CD8-positive, alpha-beta T cell (primary cell): ENCODE measurements at regions of chr3 and their contacts with region 1.

Region 1: GRCh38 chr3:71710906-71711494 is 14.2 kb downstream of the EIF4E3 start:
- DNase-seq: peak in 2 of 9 experiments; percentile 59 to 69
- ATAC-seq: peak; percentile 73
- H3K4me3 ChIP-seq: no peak overlapping the region
- H3K4me3 Mint-ChIP-seq: no peak overlapping the region
- H3K27ac ChIP-seq: no peak overlapping the region
- H3K27ac Mint-ChIP-seq: peak overlapping the region; percentile 7
- H3K4me1 ChIP-seq: peaks cover 23% of the 10 kb centered on the region
- H3K4me1 Mint-ChIP-seq: peaks cover 72% of the 10 kb centered on the region
- H3K27me3 ChIP-seq: no peaks in the 10 kb centered on the region
- H3K27me3 Mint-ChIP-seq: no peaks in the 10 kb centered on the region
- CTCF ChIP-seq: peak; percentile 87

Region 2: GRCh38 chr3:71753630-71754483 is 42.9 kb after region 1 on chr3 and contains the start of gene GPR27:
- CTCF ChIA-PET with region 1: interaction called, 6 read pairs
- POLR2A ChIA-PET with region 1: no interaction called
- intact Hi-C with region 1: loop called in 1 of 2 experiments (anchors 5 kb)
- DNase-seq: peak in 2 of 9 experiments; percentile 33 to 40
- ATAC-seq: peak; percentile 51
- H3K4me3 ChIP-seq: peak within 1 kb of the TSS in 1 of 2 experiments; percentile 33
- H3K4me3 Mint-ChIP-seq: peak within 1 kb of the TSS; percentile 78
- H3K27ac ChIP-seq: no peak within 1 kb of the TSS
- H3K27ac Mint-ChIP-seq: no peak within 1 kb of the TSS
- H3K4me1 ChIP-seq: peaks cover 5% of the 10 kb centered on the region
- H3K4me1 Mint-ChIP-seq: peaks cover 10% of the 10 kb centered on the region
- H3K27me3 ChIP-seq: peaks cover 3 to 15% of the 10 kb centered on the region in 2 experiments
- H3K27me3 Mint-ChIP-seq: peaks cover 31% of the 10 kb centered on the region
- CTCF ChIP-seq: no peak
- total RNA-seq, gene GPR27: 0.28 to 0.30 TPM

Region 3: GRCh38 chr3:71859123-71859519 is 148.1 kb after region 1 on chr3:
- CTCF ChIA-PET with region 1: interaction called, 36 read pairs
- POLR2A ChIA-PET with region 1: no interaction called
- intact Hi-C with region 1: loop called (anchors 1 kb)
- DNase-seq: peak in 2 of 9 experiments; percentile 65 to 75
- ATAC-seq: peak; percentile 75
- H3K4me3 ChIP-seq: no peak overlapping the region
- H3K4me3 Mint-ChIP-seq: no peak overlapping the region
- H3K27ac ChIP-seq: no peak overlapping the region
- H3K27ac Mint-ChIP-seq: no peak overlapping the region
- H3K4me1 ChIP-seq: no peaks in the 10 kb centered on the region
- H3K4me1 Mint-ChIP-seq: peaks cover 5% of the 10 kb centered on the region
- H3K27me3 ChIP-seq: peaks cover 0 to 4% of the 10 kb centered on the region in 2 experiments
- H3K27me3 Mint-ChIP-seq: peaks cover 24% of the 10 kb centered on the region
- CTCF ChIP-seq: peak; percentile 47

Region 4: DNA sequence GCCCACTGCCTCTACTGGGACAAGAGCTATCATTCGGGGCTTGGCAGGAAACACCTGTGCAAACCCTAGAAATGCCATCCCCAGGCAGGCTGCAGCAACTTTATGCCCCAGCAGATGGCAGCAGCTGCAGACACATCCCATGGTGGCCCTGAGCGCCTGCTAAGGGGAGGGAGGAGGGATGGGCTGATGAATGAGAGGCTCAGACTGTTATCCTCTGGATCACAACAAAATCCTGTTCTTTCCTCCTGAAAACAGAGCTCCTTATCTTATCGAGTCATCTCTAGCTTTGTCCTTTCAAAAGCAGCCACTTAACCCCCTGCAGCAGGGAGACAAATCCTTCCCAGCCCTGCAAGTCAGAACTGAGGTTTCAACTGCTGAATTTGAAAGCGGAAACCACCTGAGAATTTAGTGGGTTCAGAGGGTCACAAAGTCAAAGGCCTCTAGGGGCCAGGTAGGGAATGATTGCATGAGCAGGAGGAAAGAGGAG is 164.5 kb after region 1 on chr3:
- CTCF ChIA-PET with region 1: interaction called, 19 read pairs
- POLR2A ChIA-PET with region 1: no interaction called
- intact Hi-C with region 1: loop called (anchors 1 to 5 kb)
- DNase-seq: peak; percentile 60 to 84 (median 71)
- ATAC-seq: peak; percentile 99
- H3K4me3 ChIP-seq: no peak overlapping the region
- H3K4me3 Mint-ChIP-seq: no peak overlapping the region
- H3K27ac ChIP-seq: no peak overlapping the region
- H3K27ac Mint-ChIP-seq: no peak overlapping the region
- H3K4me1 ChIP-seq: no peaks in the 10 kb centered on the region
- H3K4me1 Mint-ChIP-seq: peaks cover 12% of the 10 kb centered on the region
- H3K27me3 ChIP-seq: no peaks in the 10 kb centered on the region
- H3K27me3 Mint-ChIP-seq: peaks cover 3% of the 10 kb centered on the region
- CTCF ChIP-seq: peak; percentile 86